ENCODE measurements at regions of chr17 and their contacts with region 1.

Region 1: DNA sequence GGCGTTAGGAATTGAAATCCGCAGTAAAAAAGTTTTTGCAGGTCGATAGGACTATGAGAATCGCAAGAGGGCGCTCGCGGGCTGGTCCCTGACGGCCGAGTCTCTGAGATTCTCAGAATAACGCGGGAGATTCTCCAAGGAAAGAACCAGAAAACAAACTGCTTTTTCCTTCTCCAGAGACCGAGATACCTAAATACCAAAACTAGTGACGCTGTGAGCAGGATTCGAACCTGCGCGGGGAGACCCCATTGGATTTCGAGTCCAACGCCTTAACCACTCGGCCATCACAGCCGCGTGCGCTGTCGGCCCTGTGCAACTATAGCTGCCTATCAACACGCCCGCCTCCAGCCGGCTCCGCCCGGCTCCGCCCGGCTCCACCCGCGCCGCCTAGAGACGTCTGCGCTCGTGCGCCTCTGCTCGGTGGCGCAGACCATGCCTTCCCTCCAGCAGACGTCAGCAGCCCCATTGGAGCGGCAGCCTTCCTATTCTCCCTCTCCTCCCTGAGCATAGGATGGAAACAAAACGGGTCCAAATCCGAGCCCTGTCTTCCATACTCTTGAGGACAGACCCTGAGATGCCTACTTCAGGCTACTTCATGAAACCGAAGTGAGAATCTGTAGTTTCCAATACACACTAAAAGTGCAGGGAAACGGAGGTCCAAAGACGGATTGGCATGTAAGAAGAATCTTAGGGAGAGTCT is 13.4 kb downstream of the PER1 start:
- DNase-seq: peak; percentile 92 to 98 (median 95)
- ATAC-seq: peak; percentile 84
- H3K4me3 ChIP-seq: peak overlapping the region; percentile 70 to 75
- H3K4me3 Mint-ChIP-seq: no peak overlapping the region
- H3K27ac ChIP-seq: peak overlapping the region; percentile 89 to 97
- H3K27ac Mint-ChIP-seq: no peak overlapping the region
- H3K4me1 ChIP-seq: peaks cover 18% of the 10 kb centered on the region
- H3K4me1 Mint-ChIP-seq: no peaks in the 10 kb centered on the region
- H3K27me3 ChIP-seq: no peaks in the 10 kb centered on the region
- H3K27me3 Mint-ChIP-seq: no peaks in the 10 kb centered on the region
- CTCF ChIP-seq: peak; percentile 87

Region 2: GRCh38 chr17:7956228-7956965 is 182.4 kb before region 1 on chr17:
- CTCF ChIA-PET with region 1: no interaction called
- POLR2A ChIA-PET with region 1: no interaction called
- intact Hi-C with region 1: no loop called
- DNase-seq: no peak
- ATAC-seq: no peak
- H3K4me3 ChIP-seq: no peak overlapping the region
- H3K4me3 Mint-ChIP-seq: no peak overlapping the region
- H3K27ac ChIP-seq: no peak overlapping the region
- H3K27ac Mint-ChIP-seq: no peak overlapping the region
- H3K4me1 ChIP-seq: no peaks in the 10 kb centered on the region
- H3K4me1 Mint-ChIP-seq: peaks cover 2% of the 10 kb centered on the region
- H3K27me3 ChIP-seq: no peaks in the 10 kb centered on the region
- H3K27me3 Mint-ChIP-seq: peaks cover 5% of the 10 kb centered on the region
- CTCF ChIP-seq: no peak

Region 3: GRCh38 chr17:7989781-7990655 is 148.8 kb before region 1 on chr17:
- CTCF ChIA-PET with region 1: no interaction called
- POLR2A ChIA-PET with region 1: no interaction called
- intact Hi-C with region 1: no loop called
- DNase-seq: peak; percentile 85 to 99 (median 92)
- ATAC-seq: peak; percentile 96
- H3K4me3 ChIP-seq: peak overlapping the region; percentile 47 to 61
- H3K4me3 Mint-ChIP-seq: peak overlapping the region; percentile 77
- H3K27ac ChIP-seq: peak overlapping the region; percentile 51 to 61
- H3K27ac Mint-ChIP-seq: peak overlapping the region; percentile 86
- H3K4me1 ChIP-seq: peaks cover 13% of the 10 kb centered on the region
- H3K4me1 Mint-ChIP-seq: peaks cover 21% of the 10 kb centered on the region
- H3K27me3 ChIP-seq: no peaks in the 10 kb centered on the region
- H3K27me3 Mint-ChIP-seq: peaks cover under 1% of the 10 kb centered on the region
- CTCF ChIP-seq: peak; percentile 85

Region 4: DNA sequence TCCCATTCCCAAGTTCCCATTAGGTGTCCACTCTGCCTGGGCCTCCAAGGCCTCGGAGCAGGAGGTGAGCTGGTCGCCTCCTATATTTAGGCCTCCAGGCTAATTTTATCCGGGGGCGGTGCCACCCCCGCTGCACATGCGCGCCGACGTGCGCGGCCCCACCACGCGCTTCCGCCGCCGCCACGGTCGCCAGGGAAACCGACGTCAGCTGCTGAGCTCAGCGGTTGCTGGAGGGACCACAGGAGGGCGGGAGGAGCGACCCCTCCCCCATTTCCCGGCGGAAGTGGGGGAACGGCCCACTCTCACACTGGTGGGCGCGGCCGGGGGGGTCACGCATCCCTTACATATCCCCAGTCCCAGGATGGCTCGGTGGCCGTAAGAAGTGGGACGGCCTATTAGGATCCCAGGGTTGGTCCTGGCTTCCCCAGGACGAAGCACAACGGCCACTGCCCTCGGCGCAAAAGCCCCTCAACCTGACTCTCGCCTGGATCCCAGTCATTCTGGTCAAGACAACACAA is 12.4 kb after region 1 on chr17:
- CTCF ChIA-PET with region 1: interaction called, 98 read pairs
- POLR2A ChIA-PET with region 1: interaction called, 34 read pairs
- intact Hi-C with region 1: loop called (anchors 1 kb)
- DNase-seq: peak in 8 of 9 experiments; percentile 85 to 96 (median 90)
- ATAC-seq: peak; percentile 44
- H3K4me3 ChIP-seq: peak overlapping the region; percentile 63 to 69
- H3K4me3 Mint-ChIP-seq: no peak overlapping the region
- H3K27ac ChIP-seq: peak overlapping the region; percentile 100
- H3K27ac Mint-ChIP-seq: no peak overlapping the region
- H3K4me1 ChIP-seq: peaks cover 56% of the 10 kb centered on the region
- H3K4me1 Mint-ChIP-seq: peaks cover 49% of the 10 kb centered on the region
- H3K27me3 ChIP-seq: no peaks in the 10 kb centered on the region
- H3K27me3 Mint-ChIP-seq: no peaks in the 10 kb centered on the region
- CTCF ChIP-seq: no peak

Region 5: DNA sequence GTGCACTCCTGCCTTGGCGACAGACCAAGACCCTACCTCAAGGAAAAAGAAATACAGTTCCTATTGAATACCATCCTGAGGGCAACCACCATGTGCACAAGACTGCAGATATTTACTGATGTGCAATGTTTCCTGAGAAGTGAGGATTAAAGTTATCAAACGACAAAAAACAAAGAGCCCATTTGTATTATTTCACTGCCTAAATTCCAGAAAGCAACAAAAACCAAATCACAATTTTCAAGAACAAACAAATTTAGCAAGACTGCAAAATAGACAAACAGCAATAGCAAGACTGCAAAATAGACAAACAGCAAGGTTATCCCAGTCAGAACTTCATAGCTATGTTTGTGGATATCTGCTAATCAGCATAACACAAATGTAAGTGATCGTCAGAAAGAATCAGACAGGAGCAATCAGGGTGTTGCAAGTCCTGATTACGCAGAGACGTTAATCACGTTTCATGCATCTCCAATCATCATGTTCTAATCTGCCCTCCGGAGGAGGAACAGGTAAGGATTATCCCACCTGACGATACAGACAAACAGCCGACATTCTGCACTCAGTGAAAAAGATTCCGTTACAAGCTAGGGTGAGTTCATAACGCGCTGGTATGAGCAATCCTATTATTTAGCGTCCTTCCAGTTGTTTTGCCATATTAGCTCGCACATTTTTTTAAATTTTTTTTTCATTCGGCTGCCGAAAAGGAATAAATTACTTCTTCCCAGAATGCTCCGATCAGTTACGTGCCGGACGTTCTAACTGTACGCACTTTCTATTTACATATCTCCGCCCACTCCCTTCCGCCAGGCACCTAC is 34.4 kb after region 1 on chr17:
- CTCF ChIA-PET with region 1: interaction called, 6 read pairs
- POLR2A ChIA-PET with region 1: interaction called, 8 read pairs
- intact Hi-C with region 1: loop called in 1 of 2 experiments (anchors 1 kb)
- DNase-seq: peak in 7 of 9 experiments; percentile 61 to 96 (median 80)
- ATAC-seq: peak; percentile 84
- H3K4me3 ChIP-seq: peak overlapping the region; percentile 39 to 46
- H3K4me3 Mint-ChIP-seq: peak overlapping the region; percentile 83
- H3K27ac ChIP-seq: peak overlapping the region; percentile 94 to 98
- H3K27ac Mint-ChIP-seq: peak overlapping the region; percentile 100
- H3K4me1 ChIP-seq: peaks cover 40% of the 10 kb centered on the region
- H3K4me1 Mint-ChIP-seq: peaks cover 50% of the 10 kb centered on the region
- H3K27me3 ChIP-seq: no peaks in the 10 kb centered on the region
- H3K27me3 Mint-ChIP-seq: no peaks in the 10 kb centered on the region
- CTCF ChIP-seq: no peak

Region 6: GRCh38 chr17:8294814-8295316 is 156.0 kb after region 1 on chr17:
- CTCF ChIA-PET with region 1: interaction called, 13 read pairs
- POLR2A ChIA-PET with region 1: interaction called, 8 read pairs
- intact Hi-C with region 1: loop called (anchors 1 kb)
- DNase-seq: no peak
- ATAC-seq: no peak
- H3K4me3 ChIP-seq: peak overlapping the region; percentile 80 to 98
- H3K4me3 Mint-ChIP-seq: peak overlapping the region; percentile 86
- H3K27ac ChIP-seq: peak overlapping the region; percentile 80 to 87
- H3K27ac Mint-ChIP-seq: peak overlapping the region; percentile 90
- H3K4me1 ChIP-seq: peaks cover 12% of the 10 kb centered on the region
- H3K4me1 Mint-ChIP-seq: peaks cover 30% of the 10 kb centered on the region
- H3K27me3 ChIP-seq: no peaks in the 10 kb centered on the region
- H3K27me3 Mint-ChIP-seq: no peaks in the 10 kb centered on the region
- CTCF ChIP-seq: no peak

Region 7: GRCh38 chr17:8430966-8431365 is 292.1 kb after region 1 on chr17:
- CTCF ChIA-PET with region 1: no interaction called
- POLR2A ChIA-PET with region 1: no interaction called
- intact Hi-C with region 1: no loop called
- DNase-seq: no peak
- ATAC-seq: no peak
- H3K4me3 ChIP-seq: no peak overlapping the region
- H3K4me3 Mint-ChIP-seq: no peak overlapping the region
- H3K27ac ChIP-seq: no peak overlapping the region
- H3K27ac Mint-ChIP-seq: no peak overlapping the region
- H3K4me1 ChIP-seq: peaks cover 4% of the 10 kb centered on the region
- H3K4me1 Mint-ChIP-seq: peaks cover 6% of the 10 kb centered on the region
- H3K27me3 ChIP-seq: no peaks in the 10 kb centered on the region
- H3K27me3 Mint-ChIP-seq: no peaks in the 10 kb centered on the region
- CTCF ChIP-seq: no peak

Measured in CD8-positive, alpha-beta T cell (primary cell).